H1 (cell line): ENCODE measurements at regions of chr2 and their contacts with region 1.

Region 1: DNA sequence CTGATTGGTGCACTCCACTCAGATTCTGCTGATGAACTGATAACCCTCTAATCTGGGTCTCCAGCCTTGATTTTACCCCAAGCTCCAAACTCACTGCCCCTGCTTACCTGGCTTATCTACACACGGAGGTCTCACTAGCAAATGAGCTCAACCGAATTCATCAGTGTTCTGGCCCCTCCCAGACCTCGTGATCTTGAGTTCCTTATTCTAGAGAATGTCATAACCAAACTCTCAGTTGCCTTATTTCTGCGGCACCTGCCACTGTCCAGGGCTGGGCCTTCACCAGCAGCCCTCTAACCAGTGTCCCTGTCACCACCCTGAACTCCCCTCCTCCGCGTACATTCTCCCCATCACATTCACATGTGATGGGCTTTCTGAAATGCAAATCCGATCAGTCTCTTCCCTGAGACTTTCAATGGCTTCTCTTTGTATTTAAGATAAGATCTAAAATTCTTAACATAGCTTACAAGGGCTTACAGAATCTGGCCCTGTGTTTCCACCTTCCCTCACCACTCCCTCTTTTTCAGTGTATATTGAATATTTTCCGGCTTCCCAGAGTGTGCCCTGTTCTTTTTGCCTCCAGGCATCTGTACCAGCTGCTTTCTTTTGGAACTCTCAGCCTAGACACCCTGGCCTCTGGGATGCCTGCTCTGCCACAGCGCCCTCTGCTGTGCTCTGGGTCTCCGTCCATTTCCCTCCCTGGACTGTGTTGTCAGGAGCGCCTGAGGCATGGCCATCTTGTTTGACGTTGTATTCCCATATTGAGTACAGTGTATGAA is 31.1 kb downstream of the NAB1 start:
- DNase-seq: peak; percentile 63 to 79
- H3K4me3 ChIP-seq: peak overlapping the region in 1 of 4 experiments; percentile 14; a peak in 1 of 8 replicates
- H3K27ac ChIP-seq: no peak overlapping the region
- H3K4me1 ChIP-seq: peaks cover 3 to 12% (median 8%) of the 10 kb centered on the region in 4 experiments; a peak in 5 of 7 replicates
- H3K27me3 ChIP-seq: no peaks in the 10 kb centered on the region
- CTCF ChIP-seq: peak; percentile 82 to 97 (median 95)
- EP300 ChIP-seq: no peak
- POLR2A ChIP-seq: no peak
- RAD21 ChIP-seq: peak; percentile 79 to 82

Region 2: DNA sequence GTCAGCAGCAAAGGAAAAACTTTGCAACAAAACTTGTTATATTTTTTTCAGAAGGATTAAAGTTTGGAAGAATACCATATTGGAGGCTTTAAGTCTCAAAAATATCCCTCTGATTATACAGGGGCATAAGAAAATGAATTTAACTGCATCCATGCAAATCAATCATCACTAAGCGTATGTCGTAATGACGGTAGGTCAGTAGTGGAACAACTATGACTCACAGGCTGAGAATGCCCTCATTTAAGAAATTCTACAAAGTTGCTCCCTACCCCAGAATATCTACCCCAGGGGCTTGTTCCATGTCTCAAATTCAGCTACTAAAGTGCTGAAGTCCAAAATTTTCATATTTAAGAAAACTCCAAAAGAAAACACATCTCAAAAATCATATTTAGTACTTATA is 43.6 kb before region 1 on chr2:
- CTCF ChIA-PET with region 1: interaction called, 16 read pairs
- POLR2A ChIA-PET with region 1: no interaction called
- DNase-seq: no peak
- H3K4me3 ChIP-seq: no peak overlapping the region
- H3K27ac ChIP-seq: no peak overlapping the region
- H3K4me1 ChIP-seq: no peaks in the 10 kb centered on the region
- H3K27me3 ChIP-seq: no peaks in the 10 kb centered on the region
- CTCF ChIP-seq: no peak
- EP300 ChIP-seq: no peak
- POLR2A ChIP-seq: no peak
- RAD21 ChIP-seq: no peak

Region 3: GRCh38 chr2:190663348-190663747 is 16.7 kb before region 1 on chr2:
- CTCF ChIA-PET with region 1: interaction called, 13 read pairs
- POLR2A ChIA-PET with region 1: interaction called, 3 read pairs
- DNase-seq: no peak
- H3K4me3 ChIP-seq: no peak overlapping the region
- H3K27ac ChIP-seq: no peak overlapping the region
- H3K4me1 ChIP-seq: 0 out of 7 replicates have a peak, but pooled peaks cover 0 to 2% (median 0%) of the 10 kb centered on the region in 4 experiments
- H3K27me3 ChIP-seq: no peaks in the 10 kb centered on the region
- CTCF ChIP-seq: no peak
- EP300 ChIP-seq: no peak
- POLR2A ChIP-seq: no peak
- RAD21 ChIP-seq: no peak

Region 4: DNA sequence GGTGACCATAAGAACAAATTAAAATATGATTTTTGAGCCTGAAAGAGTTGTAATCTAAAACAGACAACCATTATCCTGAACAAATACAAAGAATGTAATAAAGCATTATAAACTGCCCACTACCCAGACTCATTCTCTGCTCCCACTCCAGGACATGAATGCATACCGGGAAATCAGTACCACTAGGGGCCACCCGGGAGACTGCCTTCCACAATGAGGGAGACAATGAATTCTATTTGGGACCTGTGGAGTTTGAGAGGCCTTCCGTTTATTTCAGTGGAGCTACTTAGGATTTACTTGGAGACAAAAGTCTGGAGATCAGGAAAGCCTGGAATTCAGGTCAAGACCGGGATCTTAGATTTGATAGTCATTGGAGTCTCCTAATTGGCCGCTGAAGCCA is 18.9 kb after region 1 on chr2:
- CTCF ChIA-PET with region 1: interaction called, 42 read pairs
- POLR2A ChIA-PET with region 1: interaction called, 4 read pairs
- DNase-seq: no peak
- H3K4me3 ChIP-seq: no peak overlapping the region
- H3K27ac ChIP-seq: 0 out of 2 replicates have a peak overlapping the region, but pooled peaks have one; percentile 13
- H3K4me1 ChIP-seq: peaks cover 0 to 14% (median 9%) of the 10 kb centered on the region in 4 experiments; a peak in 6 of 7 replicates
- H3K27me3 ChIP-seq: no peaks in the 10 kb centered on the region
- CTCF ChIP-seq: peak; percentile 13 to 32 (median 22); a peak in 3 of 4 replicates
- EP300 ChIP-seq: no peak
- POLR2A ChIP-seq: no peak
- RAD21 ChIP-seq: peak in 1 of 2 experiments; percentile 22; a peak in 2 of 4 replicates